ENCODE measurements at regions of chr5 and their contacts with region 1.

Region 1: GRCh38 chr5:180611140-180611850 is 20.0 kb upstream of the SCGB3A1 start:
- DNase-seq: no peak
- H3K4me3 ChIP-seq: no peak overlapping the region
- H3K27ac ChIP-seq: no peak overlapping the region
- H3K4me1 ChIP-seq: no peaks in the 10 kb centered on the region
- H3K27me3 ChIP-seq: no peaks in the 10 kb centered on the region
- CTCF ChIP-seq: no peak

Region 2: GRCh38 chr5:180689775-180690174 is 78.5 kb after region 1 on chr5:
- CTCF ChIA-PET with region 1: no interaction called
- dilution Hi-C with region 1: loop called (anchors 5 kb)
- in situ Hi-C with region 1: no loop called
- intact Hi-C with region 1: no loop called
- DNase-seq: no peak
- H3K4me3 ChIP-seq: no peak overlapping the region
- H3K27ac ChIP-seq: no peak overlapping the region
- H3K4me1 ChIP-seq: no peaks in the 10 kb centered on the region
- H3K27me3 ChIP-seq: no peaks in the 10 kb centered on the region
- CTCF ChIP-seq: no peak